HepG2 (cell line): ENCODE measurements at regions of chr9 and their contacts with region 1.

Region 1: GRCh38 chr9:127066851-127067136 is 55.6 kb downstream of the ANGPTL2 start:
- DNase-seq: no peak
- ATAC-seq: no peak
- H3K4me3 ChIP-seq: no peak overlapping the region
- H3K27ac ChIP-seq: no peak overlapping the region
- H3K4me1 ChIP-seq: peaks cover 12% of the 10 kb centered on the region; the same call in 1 of the 2 replicates
- H3K27me3 ChIP-seq: no peaks in the 10 kb centered on the region
- CTCF ChIP-seq: no peak
- EP300 ChIP-seq: no peak
- POLR2A ChIP-seq: no peak
- RAD21 ChIP-seq: no peak

Region 2: GRCh38 chr9:126893079-126893478 is 173.7 kb before region 1 on chr9:
- CTCF ChIA-PET with region 1: no interaction called
- POLR2A ChIA-PET with region 1: no interaction called
- in situ Hi-C with region 1: no loop called
- intact Hi-C with region 1: no loop called
- DNase-seq: peak; percentile 25
- ATAC-seq: peak; percentile 59; the same call in 2 of the 3 replicates
- H3K4me3 ChIP-seq: no peak overlapping the region
- H3K27ac ChIP-seq: no peak overlapping the region
- H3K4me1 ChIP-seq: peaks cover 4% of the 10 kb centered on the region; the same call in 1 of the 2 replicates
- H3K27me3 ChIP-seq: no peaks in the 10 kb centered on the region
- CTCF ChIP-seq: peak; percentile 67
- EP300 ChIP-seq: no peak
- POLR2A ChIP-seq: no peak
- RAD21 ChIP-seq: no peak

Region 3: GRCh38 chr9:127083138-127083980 is 16.6 kb after region 1 on chr9:
- CTCF ChIA-PET with region 1: no interaction called
- POLR2A ChIA-PET with region 1: no interaction called
- in situ Hi-C with region 1: no loop called
- intact Hi-C with region 1: no loop called
- DNase-seq: no peak
- ATAC-seq: no peak; the same call in 2 of the 3 replicates
- H3K4me3 ChIP-seq: no peak overlapping the region
- H3K27ac ChIP-seq: no peak overlapping the region
- H3K4me1 ChIP-seq: peaks cover 17% of the 10 kb centered on the region
- H3K27me3 ChIP-seq: no peaks in the 10 kb centered on the region
- CTCF ChIP-seq: no peak
- EP300 ChIP-seq: no peak
- POLR2A ChIP-seq: no peak
- RAD21 ChIP-seq: no peak

Region 4: DNA sequence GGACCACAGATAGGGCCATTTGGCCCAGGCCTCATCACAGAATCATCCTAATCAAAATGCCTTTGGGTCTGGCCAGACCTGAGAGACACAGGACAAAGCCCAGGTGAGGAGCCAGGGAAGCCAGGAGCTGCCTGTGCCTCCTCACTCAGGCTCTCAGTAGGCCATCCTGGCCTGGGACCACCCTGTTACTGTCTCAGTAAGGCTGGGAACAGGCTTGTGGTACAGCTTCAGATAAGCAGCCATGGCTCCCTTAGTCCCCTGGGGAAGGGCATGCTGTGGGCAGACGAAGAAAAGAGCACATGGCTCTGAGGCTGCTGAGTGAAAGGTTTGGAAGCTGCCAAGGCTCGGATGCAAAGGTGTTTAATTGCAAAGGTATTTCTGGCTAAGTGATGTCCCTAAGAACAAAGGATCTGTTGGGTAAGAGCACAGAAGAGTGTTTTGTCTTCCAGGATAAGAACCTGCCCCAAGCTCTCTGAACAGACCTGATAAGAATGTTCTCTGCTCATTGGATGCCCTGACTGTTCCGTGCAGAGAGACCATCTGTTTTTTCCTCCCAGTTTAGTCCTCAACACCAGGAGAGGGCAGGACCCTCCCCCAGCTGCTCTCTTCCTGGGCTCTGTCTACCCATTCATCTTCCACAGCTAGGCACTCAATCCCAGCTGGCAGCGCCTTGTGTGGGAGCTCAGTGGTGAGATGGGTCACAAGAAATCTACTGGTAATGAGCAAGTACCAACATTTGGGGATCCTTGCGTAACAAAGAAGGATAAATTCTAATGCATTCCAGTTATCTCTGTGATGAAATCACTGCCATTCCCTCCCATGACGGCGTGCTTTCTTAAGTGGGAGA is 37.9 kb after region 1 on chr9:
- CTCF ChIA-PET with region 1: no interaction called
- POLR2A ChIA-PET with region 1: no interaction called
- in situ Hi-C with region 1: no loop called
- intact Hi-C with region 1: no loop called
- DNase-seq: no peak
- ATAC-seq: no peak
- H3K4me3 ChIP-seq: no peak overlapping the region
- H3K27ac ChIP-seq: no peak overlapping the region
- H3K4me1 ChIP-seq: peaks cover 60% of the 10 kb centered on the region
- H3K27me3 ChIP-seq: no peaks in the 10 kb centered on the region
- CTCF ChIP-seq: no peak
- EP300 ChIP-seq: no peak
- POLR2A ChIP-seq: no peak
- RAD21 ChIP-seq: no peak

Region 5: GRCh38 chr9:127133739-127134167 is 67.0 kb after region 1 on chr9:
- CTCF ChIA-PET with region 1: no interaction called
- POLR2A ChIA-PET with region 1: no interaction called
- in situ Hi-C with region 1: no loop called
- intact Hi-C with region 1: loop called (anchors 2 kb)
- DNase-seq: no peak
- ATAC-seq: no peak; the same call in 2 of the 3 replicates
- H3K4me3 ChIP-seq: peak overlapping the region in 1 of 3 experiments; percentile 20; a peak in 1 of 6 replicates
- H3K27ac ChIP-seq: no peak overlapping the region
- H3K4me1 ChIP-seq: peaks cover 57% of the 10 kb centered on the region
- H3K27me3 ChIP-seq: no peaks in the 10 kb centered on the region; a peak in 1 of 5 replicates
- CTCF ChIP-seq: no peak
- EP300 ChIP-seq: no peak
- POLR2A ChIP-seq: no peak
- RAD21 ChIP-seq: no peak